Activated CD8-positive, alpha-beta T cell treated with anti-CD3 and anti-CD28 coated beads, Interleukin-2, amount 10 ng/mL, durations not matched to agents 7 days and 5 days (primary cell): ENCODE measurements at regions of chr1 and their contacts with region 1.

Region 1: DNA sequence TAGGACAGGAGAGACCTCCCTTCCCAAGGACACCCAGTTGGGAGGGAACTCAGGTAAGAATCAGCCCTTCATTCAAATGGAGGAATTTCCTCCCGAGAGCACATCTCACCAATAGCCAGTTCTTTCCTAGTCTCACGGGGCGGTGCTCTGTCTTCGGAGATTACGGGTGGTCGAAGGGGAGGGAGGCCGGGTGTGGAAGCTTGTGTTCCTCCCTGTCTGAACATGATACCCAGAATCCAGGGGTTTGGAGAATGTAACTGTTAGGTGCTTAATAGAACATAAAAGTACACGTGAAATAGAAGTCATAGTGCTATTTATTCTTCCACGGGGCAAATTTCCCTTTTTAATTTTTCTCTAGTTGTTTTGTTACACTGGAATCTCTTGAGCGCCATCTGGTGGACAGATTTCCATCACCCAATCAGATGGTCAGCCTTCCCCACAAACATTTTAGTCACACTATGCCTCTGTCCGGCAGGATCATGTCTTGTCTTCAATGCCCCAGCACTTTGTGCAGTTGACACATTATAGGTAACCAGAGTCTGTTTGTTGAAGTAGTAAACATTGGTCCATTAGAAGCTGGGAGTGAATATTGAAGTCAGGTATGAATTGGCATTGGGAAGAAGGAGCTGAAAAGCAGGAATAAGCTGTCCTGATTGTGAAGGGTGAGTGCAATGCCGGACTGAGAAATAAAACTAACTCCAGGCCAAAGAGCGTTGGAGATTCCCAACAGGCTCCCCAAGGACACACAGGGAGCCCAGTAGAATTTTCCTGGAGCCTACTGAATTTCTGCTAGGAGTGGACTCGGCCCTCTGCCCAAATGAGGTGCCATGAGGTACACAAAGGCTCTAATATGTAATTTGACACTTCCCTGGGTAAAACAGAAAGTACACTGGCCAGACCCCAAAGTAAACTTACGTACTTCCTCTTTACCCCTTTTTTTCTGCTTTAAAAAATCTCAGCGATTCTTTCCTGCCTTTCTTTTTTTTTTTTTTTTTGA is 27.6 kb upstream of the ZNF697 start:
- DNase-seq: peak; percentile 83
- ATAC-seq: peak; percentile 71
- H3K4me3 Mint-ChIP-seq: peak overlapping the region; percentile 51
- H3K27ac Mint-ChIP-seq: no peak overlapping the region
- H3K4me1 Mint-ChIP-seq: peaks cover 8% of the 10 kb centered on the region
- H3K27me3 Mint-ChIP-seq: peaks cover 23% of the 10 kb centered on the region

Region 2: GRCh38 chr1:119613769-119614720 is 61.6 kb before region 1 on chr1:
- CTCF ChIA-PET with region 1: interaction called, 85 read pairs
- POLR2A ChIA-PET with region 1: no interaction called
- DNase-seq: peak; percentile 82
- ATAC-seq: peak; percentile 89
- H3K4me3 Mint-ChIP-seq: no peak overlapping the region
- H3K27ac Mint-ChIP-seq: no peak overlapping the region
- H3K4me1 Mint-ChIP-seq: no peaks in the 10 kb centered on the region
- H3K27me3 Mint-ChIP-seq: peaks cover 2% of the 10 kb centered on the region

Region 3: DNA sequence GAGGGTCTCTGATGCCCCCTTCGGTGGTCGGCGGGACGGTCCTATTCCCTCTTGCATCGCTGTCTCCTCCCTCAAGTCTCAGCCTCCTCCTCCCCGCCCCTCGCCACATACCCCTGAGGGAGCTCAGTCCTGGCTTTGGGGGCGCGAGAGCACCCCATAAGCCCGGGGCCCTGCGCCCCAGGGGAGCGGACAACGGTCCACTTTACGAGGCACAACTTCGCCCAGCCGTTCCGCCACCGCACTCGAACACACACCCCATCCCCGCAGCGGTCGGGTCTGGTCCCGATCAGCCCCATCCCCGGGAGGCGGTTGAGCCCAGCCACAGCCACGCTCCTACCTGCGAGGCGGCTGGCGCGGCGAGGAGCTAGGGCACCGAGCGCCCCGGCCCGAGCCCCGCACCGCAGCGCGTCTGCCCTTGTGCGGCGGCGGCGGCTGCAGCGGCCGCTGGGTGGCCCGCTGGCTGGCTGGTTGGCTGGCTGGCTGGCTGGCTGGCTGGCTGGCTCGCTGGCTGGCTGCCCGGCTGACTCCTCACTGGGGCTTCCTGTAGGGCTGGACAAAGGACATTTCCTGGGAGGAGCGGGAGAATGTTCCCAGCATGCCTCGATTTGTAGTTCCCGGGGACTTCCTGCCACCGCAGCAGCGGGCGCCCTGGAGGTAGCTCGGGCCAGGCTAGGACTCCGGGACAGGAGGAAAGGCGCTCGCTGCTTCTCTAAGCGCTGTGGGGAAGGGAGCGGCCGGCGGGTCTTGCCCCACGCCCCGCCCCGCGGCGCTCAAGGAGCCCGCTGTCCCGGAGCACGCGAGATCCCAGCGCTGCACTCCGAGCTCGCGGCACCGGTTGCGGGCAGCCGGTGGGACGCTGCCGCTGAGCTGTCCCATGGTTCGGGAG is 27.7 kb before region 1 on chr1 and contains the start of gene ZNF697:
- CTCF ChIA-PET with region 1: interaction called, 20 read pairs
- POLR2A ChIA-PET with region 1: no interaction called
- DNase-seq: peak; percentile 37
- ATAC-seq: peak; percentile 88
- H3K4me3 Mint-ChIP-seq: peak within 1 kb of the TSS; percentile 68
- H3K27ac Mint-ChIP-seq: no peak within 1 kb of the TSS
- H3K4me1 Mint-ChIP-seq: peaks cover 3% of the 10 kb centered on the region
- H3K27me3 Mint-ChIP-seq: peaks cover 76% of the 10 kb centered on the region
- total RNA-seq, gene ZNF697: 0.08 TPM in 1 of 2 experiments, not detected in the other

Region 4: GRCh38 chr1:119653839-119654170 is 21.8 kb before region 1 on chr1:
- CTCF ChIA-PET with region 1: interaction called, 44 read pairs
- POLR2A ChIA-PET with region 1: no interaction called
- DNase-seq: no peak
- ATAC-seq: no peak
- H3K4me3 Mint-ChIP-seq: no peak overlapping the region
- H3K27ac Mint-ChIP-seq: no peak overlapping the region
- H3K4me1 Mint-ChIP-seq: no peaks in the 10 kb centered on the region
- H3K27me3 Mint-ChIP-seq: peaks cover 50% of the 10 kb centered on the region

Region 5: DNA sequence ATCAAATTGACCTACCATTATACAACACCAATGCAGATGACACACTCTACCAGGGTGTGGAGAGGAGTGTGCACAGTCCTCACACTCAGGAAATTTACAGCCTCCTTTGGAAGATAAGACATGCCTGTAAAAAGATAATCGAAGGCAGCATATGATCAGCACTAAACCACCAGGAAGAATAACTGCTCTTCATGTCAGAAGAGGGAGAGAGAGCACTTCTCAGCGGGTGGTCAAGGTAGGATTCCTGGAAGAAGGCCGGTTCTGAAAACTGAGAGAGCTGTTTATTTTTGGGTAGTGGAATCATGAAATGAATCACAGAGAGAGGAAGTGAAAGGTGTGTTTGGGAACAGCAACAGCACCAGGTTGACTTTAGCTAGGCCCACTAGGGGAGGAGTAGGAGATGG is 13.6 kb before region 1 on chr1:
- CTCF ChIA-PET with region 1: interaction called, 44 read pairs
- POLR2A ChIA-PET with region 1: no interaction called
- DNase-seq: no peak
- ATAC-seq: no peak
- H3K4me3 Mint-ChIP-seq: no peak overlapping the region
- H3K27ac Mint-ChIP-seq: no peak overlapping the region
- H3K4me1 Mint-ChIP-seq: peaks cover 3% of the 10 kb centered on the region
- H3K27me3 Mint-ChIP-seq: peaks cover 29% of the 10 kb centered on the region

Region 6: GRCh38 chr1:119686649-119687048 is 11.0 kb after region 1 on chr1:
- CTCF ChIA-PET with region 1: interaction called, 16 read pairs
- POLR2A ChIA-PET with region 1: no interaction called
- DNase-seq: no peak
- ATAC-seq: no peak
- H3K4me3 Mint-ChIP-seq: no peak overlapping the region
- H3K27ac Mint-ChIP-seq: no peak overlapping the region
- H3K4me1 Mint-ChIP-seq: no peaks in the 10 kb centered on the region
- H3K27me3 Mint-ChIP-seq: peaks cover 36% of the 10 kb centered on the region

Region 7: DNA sequence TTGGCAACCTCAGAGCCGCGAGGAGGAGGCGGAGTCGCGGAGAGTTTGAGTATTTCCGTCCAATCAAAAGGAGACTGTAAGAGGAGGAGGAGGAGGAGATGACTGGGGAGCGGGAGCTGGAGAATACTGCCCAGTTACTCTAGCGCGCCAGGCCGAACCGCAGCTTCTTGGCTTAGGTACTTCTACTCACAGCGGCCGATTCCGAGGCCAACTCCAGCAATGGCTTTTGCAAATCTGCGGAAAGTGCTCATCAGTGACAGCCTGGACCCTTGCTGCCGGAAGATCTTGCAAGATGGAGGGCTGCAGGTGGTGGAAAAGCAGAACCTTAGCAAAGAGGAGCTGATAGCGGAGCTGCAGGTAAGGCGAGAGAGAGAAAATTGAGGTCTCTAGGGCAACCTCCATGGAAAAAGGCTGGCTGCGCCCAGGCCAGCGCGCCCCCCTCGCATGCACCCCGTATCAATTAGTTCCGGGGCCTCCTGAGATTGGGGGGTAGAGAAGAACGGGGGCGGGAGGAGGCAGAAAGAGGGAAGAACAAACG is 36.2 kb after region 1 on chr1 and contains the start of gene PHGDH:
- CTCF ChIA-PET with region 1: interaction called, 16 read pairs
- POLR2A ChIA-PET with region 1: no interaction called
- DNase-seq: peak; percentile 81
- ATAC-seq: peak; percentile 80
- H3K4me3 Mint-ChIP-seq: peak within 1 kb of the TSS; percentile 97
- H3K27ac Mint-ChIP-seq: peak within 1 kb of the TSS; percentile 93
- H3K4me1 Mint-ChIP-seq: peaks cover 40% of the 10 kb centered on the region
- H3K27me3 Mint-ChIP-seq: peaks cover 20% of the 10 kb centered on the region
- total RNA-seq, gene PHGDH: 195 to 201 TPM